Right ventricle myocardium superior (tissue), 1 donor: ENCODE measurements at regions of chr6 and their contacts with region 1.

Region 1: GRCh38 chr6:133447924-133448323 is 206.8 kb downstream of the EYA4 start:
- DNase-seq: no peak
- ATAC-seq: no peak

Region 2: DNA sequence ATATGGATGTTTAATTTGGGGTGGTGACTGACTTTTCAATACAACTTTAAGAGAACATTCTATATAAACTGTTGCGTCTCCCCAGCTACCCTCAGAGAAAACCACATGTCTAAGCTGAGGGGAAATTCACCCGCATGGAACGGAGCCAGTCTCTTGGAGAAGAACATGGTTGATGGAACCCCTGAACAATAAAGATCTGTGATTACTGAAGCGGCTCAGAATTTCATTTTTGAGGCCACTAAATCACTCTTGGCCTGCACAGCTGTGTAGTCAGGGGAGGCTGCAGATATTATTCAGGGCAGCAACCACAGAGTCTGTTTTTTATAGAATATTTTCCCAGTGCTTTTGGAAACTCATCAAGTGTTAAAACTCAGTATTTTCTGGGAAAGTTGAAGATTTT is 133.0 kb before region 1 on chr6:
- intact Hi-C with region 1: no loop called
- DNase-seq: no peak
- ATAC-seq: no peak

Region 3: DNA sequence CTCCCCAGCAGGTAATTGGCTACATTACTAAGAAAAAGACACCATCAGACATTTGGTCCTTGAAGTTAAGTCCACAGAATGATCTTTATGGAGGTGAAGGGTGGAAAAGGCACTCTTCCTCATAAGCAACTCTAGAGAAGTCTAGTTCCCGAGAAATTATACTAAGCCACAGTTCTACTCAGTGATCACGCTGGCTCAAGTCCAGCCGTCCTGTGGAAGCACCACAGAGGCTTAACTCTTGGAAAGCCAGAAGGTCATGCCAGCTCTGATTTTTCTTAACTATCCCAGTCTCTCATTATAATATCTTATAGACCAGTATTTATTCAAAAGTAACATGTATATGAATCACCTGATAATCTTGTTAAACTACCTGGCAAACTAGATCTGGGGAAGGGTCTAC is 51.7 kb after region 1 on chr6:
- intact Hi-C with region 1: loop called (anchors 10 kb)
- DNase-seq: no peak
- ATAC-seq: no peak